ENCODE measurements at regions of chr2 and their contacts with region 1.

Region 1: DNA sequence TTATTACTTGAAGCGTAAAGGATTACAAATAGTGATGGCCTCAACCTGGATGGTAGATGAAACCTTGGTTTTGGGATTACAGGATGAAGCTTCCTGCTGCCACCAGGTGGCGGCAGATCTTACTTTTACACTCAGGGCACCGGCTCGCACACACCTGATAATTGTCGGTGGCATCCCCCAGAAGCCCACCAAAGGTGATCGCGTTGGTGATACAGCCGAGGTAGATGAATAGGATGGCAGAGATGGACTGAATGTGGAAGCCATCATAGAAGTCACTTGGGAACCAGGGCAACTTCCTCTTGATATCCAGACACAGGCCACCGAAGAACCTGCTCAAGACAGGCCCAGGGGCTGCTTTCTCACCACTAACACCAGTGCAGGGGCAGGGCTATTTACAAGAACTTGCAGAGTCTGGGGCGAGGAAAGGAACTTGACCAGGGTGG is 51.8 kb downstream of the MTHFD2 start:
- DNase-seq: peak; percentile 72
- ATAC-seq: peak; percentile 51
- H3K4me3 ChIP-seq: no peak overlapping the region
- H3K4me3 Mint-ChIP-seq: no peak overlapping the region
- H3K27ac ChIP-seq: no peak overlapping the region
- H3K27ac Mint-ChIP-seq: no peak overlapping the region
- H3K4me1 ChIP-seq: no peaks in the 10 kb centered on the region
- H3K4me1 Mint-ChIP-seq: peaks cover 6% of the 10 kb centered on the region
- H3K27me3 ChIP-seq: no peaks in the 10 kb centered on the region
- H3K27me3 Mint-ChIP-seq: no peaks in the 10 kb centered on the region
- CTCF ChIP-seq: peak; percentile 90

Region 2: DNA sequence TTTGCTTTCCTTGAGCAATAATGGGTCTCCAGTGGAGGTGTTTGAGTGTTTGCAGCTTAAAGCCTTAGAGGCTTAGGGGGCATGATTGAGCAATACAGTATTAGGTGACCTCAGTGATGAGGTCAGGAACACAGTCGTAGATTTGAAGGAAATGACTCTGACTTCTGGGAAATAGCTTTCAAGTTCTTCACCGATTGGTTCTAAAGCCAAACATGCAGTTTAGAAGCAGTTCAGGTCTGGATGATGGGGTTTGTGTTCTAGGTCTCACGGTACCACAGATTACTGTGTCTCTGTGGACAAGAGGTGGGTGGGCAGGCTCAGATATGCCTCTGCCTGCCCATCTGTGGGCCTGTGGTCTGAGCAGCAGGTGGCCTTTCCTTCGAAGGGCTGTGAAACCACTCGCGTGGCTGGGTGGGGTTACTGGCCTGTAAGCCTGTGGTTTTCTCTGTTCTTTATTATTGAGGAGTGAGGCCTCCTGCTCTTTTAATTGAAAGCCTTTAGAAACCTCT is 44.0 kb before region 1 on chr2:
- CTCF ChIA-PET with region 1: interaction called, 10 read pairs
- POLR2A ChIA-PET with region 1: no interaction called
- intact Hi-C with region 1: no loop called
- DNase-seq: peak; percentile 69
- ATAC-seq: peak; percentile 70
- H3K4me3 ChIP-seq: peak overlapping the region in 3 of 5 experiments; percentile 0 to 17 (median 5)
- H3K4me3 Mint-ChIP-seq: peak overlapping the region; percentile 47
- H3K27ac ChIP-seq: peak overlapping the region; percentile 76 to 80
- H3K27ac Mint-ChIP-seq: peak overlapping the region; percentile 88
- H3K4me1 ChIP-seq: peaks cover 24 to 26% of the 10 kb centered on the region in 2 donors
- H3K4me1 Mint-ChIP-seq: peaks cover 31% of the 10 kb centered on the region
- H3K27me3 ChIP-seq: no peaks in the 10 kb centered on the region
- H3K27me3 Mint-ChIP-seq: no peaks in the 10 kb centered on the region
- CTCF ChIP-seq: no peak

Region 3: GRCh38 chr2:74223941-74224770 is 26.1 kb before region 1 on chr2:
- CTCF ChIA-PET with region 1: no interaction called
- POLR2A ChIA-PET with region 1: no interaction called
- intact Hi-C with region 1: no loop called
- DNase-seq: no peak
- ATAC-seq: no peak
- H3K4me3 ChIP-seq: no peak overlapping the region
- H3K4me3 Mint-ChIP-seq: no peak overlapping the region
- H3K27ac ChIP-seq: no peak overlapping the region
- H3K27ac Mint-ChIP-seq: no peak overlapping the region
- H3K4me1 ChIP-seq: no peaks in the 10 kb centered on the region
- H3K4me1 Mint-ChIP-seq: no peaks in the 10 kb centered on the region
- H3K27me3 ChIP-seq: no peaks in the 10 kb centered on the region
- H3K27me3 Mint-ChIP-seq: no peaks in the 10 kb centered on the region
- CTCF ChIP-seq: no peak

Region 4: GRCh38 chr2:74238879-74239278 is 11.3 kb before region 1 on chr2:
- CTCF ChIA-PET with region 1: interaction called, 22 read pairs
- POLR2A ChIA-PET with region 1: no interaction called
- intact Hi-C with region 1: no loop called
- DNase-seq: no peak
- ATAC-seq: no peak
- H3K4me3 ChIP-seq: no peak overlapping the region
- H3K4me3 Mint-ChIP-seq: no peak overlapping the region
- H3K27ac ChIP-seq: no peak overlapping the region
- H3K27ac Mint-ChIP-seq: no peak overlapping the region
- H3K4me1 ChIP-seq: no peaks in the 10 kb centered on the region
- H3K4me1 Mint-ChIP-seq: no peaks in the 10 kb centered on the region
- H3K27me3 ChIP-seq: no peaks in the 10 kb centered on the region
- H3K27me3 Mint-ChIP-seq: no peaks in the 10 kb centered on the region
- CTCF ChIP-seq: no peak

Region 5: GRCh38 chr2:74334931-74335333 is 84.7 kb after region 1 on chr2:
- CTCF ChIA-PET with region 1: interaction called, 69 read pairs
- POLR2A ChIA-PET with region 1: no interaction called
- intact Hi-C with region 1: no loop called
- DNase-seq: peak; percentile 76
- ATAC-seq: peak; percentile 74
- H3K4me3 ChIP-seq: no peak overlapping the region
- H3K4me3 Mint-ChIP-seq: no peak overlapping the region
- H3K27ac ChIP-seq: no peak overlapping the region
- H3K27ac Mint-ChIP-seq: no peak overlapping the region
- H3K4me1 ChIP-seq: no peaks in the 10 kb centered on the region
- H3K4me1 Mint-ChIP-seq: no peaks in the 10 kb centered on the region
- H3K27me3 ChIP-seq: no peaks in the 10 kb centered on the region
- H3K27me3 Mint-ChIP-seq: no peaks in the 10 kb centered on the region
- CTCF ChIP-seq: peak; percentile 100